IMR-90 (cell line): ENCODE measurements at regions of chr1 and their contacts with region 1.

Region 1: GRCh38 chr1:178031856-178032320 is 62.0 kb upstream of the RASAL2 start:
- DNase-seq: peak; percentile 93
- ATAC-seq: peak; percentile 96
- H3K4me3 ChIP-seq: no peak overlapping the region
- H3K27ac ChIP-seq: no peak overlapping the region
- H3K4me1 ChIP-seq: no peaks in the 10 kb centered on the region
- H3K27me3 ChIP-seq: no peaks in the 10 kb centered on the region
- CTCF ChIP-seq: peak; percentile 92
- POLR2A ChIP-seq: 0 out of 2 replicates have a peak, but pooled peaks have one; percentile 23
- RAD21 ChIP-seq: peak; percentile 91

Region 2: GRCh38 chr1:177975588-177976495 is 56.0 kb before region 1 on chr1:
- CTCF ChIA-PET with region 1: no interaction called
- POLR2A ChIA-PET with region 1: no interaction called
- dilution Hi-C with region 1: no loop called
- in situ Hi-C with region 1: no loop called
- intact Hi-C with region 1: no loop called
- DNase-seq: peak; percentile 88
- ATAC-seq: peak; percentile 92
- H3K4me3 ChIP-seq: no peak overlapping the region
- H3K27ac ChIP-seq: no peak overlapping the region
- H3K4me1 ChIP-seq: peaks cover 6% of the 10 kb centered on the region
- H3K27me3 ChIP-seq: no peaks in the 10 kb centered on the region
- CTCF ChIP-seq: no peak
- POLR2A ChIP-seq: no peak
- RAD21 ChIP-seq: no peak

Region 3: GRCh38 chr1:178093205-178093957 is 61.5 kb after region 1 on chr1:
- CTCF ChIA-PET with region 1: interaction called, 10 read pairs
- POLR2A ChIA-PET with region 1: no interaction called
- dilution Hi-C with region 1: no loop called
- in situ Hi-C with region 1: no loop called
- intact Hi-C with region 1: loop called (anchors 1 kb)
- DNase-seq: peak; percentile 96
- ATAC-seq: peak; percentile 85
- H3K4me3 ChIP-seq: peak overlapping the region; percentile 77
- H3K27ac ChIP-seq: peak overlapping the region; percentile 70
- H3K4me1 ChIP-seq: peaks cover 9% of the 10 kb centered on the region; the same call in 1 of the 2 replicates
- H3K27me3 ChIP-seq: no peaks in the 10 kb centered on the region
- CTCF ChIP-seq: 0 out of 2 replicates have a peak, but pooled peaks have one; percentile 4
- POLR2A ChIP-seq: no peak; the same call in none of the 2 replicates
- RAD21 ChIP-seq: no peak

Region 4: GRCh38 chr1:178143730-178144690 is 112.1 kb after region 1 on chr1:
- CTCF ChIA-PET with region 1: no interaction called
- POLR2A ChIA-PET with region 1: no interaction called
- dilution Hi-C with region 1: no loop called
- in situ Hi-C with region 1: no loop called
- intact Hi-C with region 1: no loop called
- DNase-seq: peak; percentile 51
- ATAC-seq: peak; percentile 62; the same call in 1 of the 2 replicates
- H3K4me3 ChIP-seq: no peak overlapping the region
- H3K27ac ChIP-seq: no peak overlapping the region
- H3K4me1 ChIP-seq: peaks cover 3% of the 10 kb centered on the region
- H3K27me3 ChIP-seq: no peaks in the 10 kb centered on the region
- CTCF ChIP-seq: no peak
- POLR2A ChIP-seq: no peak
- RAD21 ChIP-seq: no peak

Region 5: DNA sequence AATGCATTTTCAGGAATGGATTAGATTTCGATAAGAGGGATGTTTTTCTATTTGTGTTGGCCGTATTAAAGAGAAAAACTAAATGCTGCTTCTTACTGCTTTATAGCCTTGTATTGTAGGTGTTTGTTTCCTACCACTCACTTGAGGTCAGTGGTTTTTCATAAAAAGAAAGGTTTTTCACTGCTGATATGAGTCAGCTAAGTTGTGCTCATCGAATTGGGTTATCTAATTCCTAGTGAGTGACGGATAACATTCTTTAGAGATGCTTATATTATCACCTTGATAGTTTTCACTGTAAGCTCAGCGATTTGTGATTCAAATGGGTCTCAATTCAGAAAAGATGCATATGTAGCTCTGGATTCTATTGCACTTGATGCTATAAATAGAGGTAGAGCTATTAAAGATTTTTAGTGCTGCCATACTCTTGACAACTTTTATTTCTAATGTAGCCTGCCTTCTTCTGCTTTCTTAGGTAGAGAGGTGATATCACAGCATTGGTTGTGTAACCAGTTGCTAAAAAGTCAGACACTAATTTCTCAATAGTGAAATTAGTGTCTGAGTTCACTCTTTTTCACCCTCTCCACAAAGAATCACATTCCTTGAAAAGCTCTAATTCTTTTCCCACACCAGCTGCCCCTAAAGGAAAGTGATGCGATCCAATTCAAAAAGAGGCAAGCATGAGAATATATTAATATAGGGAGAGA is 242.0 kb after region 1 on chr1:
- CTCF ChIA-PET with region 1: interaction called, 13 read pairs
- POLR2A ChIA-PET with region 1: no interaction called
- dilution Hi-C with region 1: loop called (anchors 25 kb)
- in situ Hi-C with region 1: no loop called
- intact Hi-C with region 1: no loop called
- DNase-seq: peak; percentile 52
- ATAC-seq: no peak
- H3K4me3 ChIP-seq: no peak overlapping the region
- H3K27ac ChIP-seq: no peak overlapping the region
- H3K4me1 ChIP-seq: peaks cover 9% of the 10 kb centered on the region
- H3K27me3 ChIP-seq: no peaks in the 10 kb centered on the region
- CTCF ChIP-seq: no peak
- POLR2A ChIP-seq: no peak
- RAD21 ChIP-seq: no peak

Region 6: GRCh38 chr1:178294654-178295053 is 262.8 kb after region 1 on chr1:
- CTCF ChIA-PET with region 1: interaction called, 11 read pairs
- POLR2A ChIA-PET with region 1: no interaction called
- dilution Hi-C with region 1: loop called (anchors 25 kb)
- in situ Hi-C with region 1: no loop called
- intact Hi-C with region 1: loop called (anchors 5 kb)
- DNase-seq: no peak
- ATAC-seq: no peak
- H3K4me3 ChIP-seq: no peak overlapping the region
- H3K27ac ChIP-seq: no peak overlapping the region
- H3K4me1 ChIP-seq: peaks cover 3% of the 10 kb centered on the region
- H3K27me3 ChIP-seq: no peaks in the 10 kb centered on the region
- CTCF ChIP-seq: no peak
- POLR2A ChIP-seq: no peak
- RAD21 ChIP-seq: no peak

Region 7: DNA sequence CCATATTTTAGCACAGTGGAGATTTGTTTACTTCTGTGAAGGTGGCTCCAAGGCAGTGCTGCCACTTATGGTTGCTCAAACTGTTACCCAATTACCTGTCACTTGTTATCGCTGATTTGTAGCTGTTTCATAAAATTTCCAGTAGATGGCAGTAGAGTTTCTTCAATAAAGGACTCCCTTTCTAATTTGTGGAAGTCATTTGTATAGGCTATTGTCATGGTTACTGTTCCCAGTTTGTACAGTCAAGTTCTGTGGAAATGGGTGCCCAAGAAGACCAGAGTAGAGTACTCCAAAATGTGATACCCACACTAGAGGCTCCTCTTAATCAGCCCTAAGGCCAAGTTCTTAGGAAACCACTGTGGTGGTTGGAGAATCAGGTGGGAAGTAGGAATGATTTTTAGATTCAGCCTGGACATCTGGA is 278.8 kb after region 1 on chr1:
- CTCF ChIA-PET with region 1: no interaction called
- POLR2A ChIA-PET with region 1: no interaction called
- dilution Hi-C with region 1: no loop called
- in situ Hi-C with region 1: no loop called
- intact Hi-C with region 1: no loop called
- DNase-seq: peak; percentile 80
- ATAC-seq: peak; percentile 84
- H3K4me3 ChIP-seq: no peak overlapping the region
- H3K27ac ChIP-seq: no peak overlapping the region
- H3K4me1 ChIP-seq: peaks cover 2% of the 10 kb centered on the region; the same call in 1 of the 2 replicates
- H3K27me3 ChIP-seq: no peaks in the 10 kb centered on the region
- CTCF ChIP-seq: peak; percentile 80
- POLR2A ChIP-seq: no peak
- RAD21 ChIP-seq: peak; percentile 82